ENCODE measurements at regions of chr2 and their contacts with region 1.

Region 1: DNA sequence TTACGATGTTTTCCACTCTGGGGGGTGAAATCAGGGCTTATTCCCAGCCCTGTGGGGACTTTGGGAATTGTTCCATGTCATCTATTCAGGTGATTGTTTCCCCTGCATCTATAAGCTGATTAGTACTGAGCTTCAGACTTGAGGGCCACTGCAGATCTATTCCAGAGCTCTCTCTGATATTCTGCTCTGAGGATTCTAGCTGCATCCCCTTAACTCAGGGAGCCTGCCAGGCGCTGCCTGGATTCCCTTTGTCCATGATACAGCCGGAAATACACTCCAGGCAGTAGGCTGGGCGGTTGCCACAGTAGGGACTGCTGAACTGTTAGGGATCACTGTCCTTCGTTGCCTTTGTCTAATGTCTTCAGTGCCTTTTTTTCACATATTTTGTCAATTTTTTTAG is 31.3 kb downstream of the PTRHD1 start:
- DNase-seq: no peak
- ATAC-seq: no peak
- H3K4me3 ChIP-seq: no peak overlapping the region
- H3K27ac ChIP-seq: no peak overlapping the region
- H3K4me1 ChIP-seq: no peaks in the 10 kb centered on the region
- H3K27me3 ChIP-seq: no peaks in the 10 kb centered on the region
- CTCF ChIP-seq: no peak
- POLR2A ChIP-seq: no peak

Region 2: GRCh38 chr2:24708537-24709152 is 53.2 kb before region 1 on chr2:
- in situ Hi-C with region 1: no loop called
- intact Hi-C with region 1: loop called (anchors 2 kb)
- DNase-seq: no peak
- ATAC-seq: no peak
- H3K4me3 ChIP-seq: no peak overlapping the region
- H3K27ac ChIP-seq: no peak overlapping the region
- H3K4me1 ChIP-seq: peaks cover 1 to 14% of the 10 kb centered on the region in 2 donors
- H3K27me3 ChIP-seq: no peaks in the 10 kb centered on the region
- CTCF ChIP-seq: no peak
- POLR2A ChIP-seq: no peak

Region 3: GRCh38 chr2:24806662-24807037 is 44.8 kb after region 1 on chr2:
- in situ Hi-C with region 1: no loop called
- intact Hi-C with region 1: no loop called
- DNase-seq: no peak
- ATAC-seq: no peak
- H3K4me3 ChIP-seq: no peak overlapping the region
- H3K27ac ChIP-seq: no peak overlapping the region
- H3K4me1 ChIP-seq: no peaks in the 10 kb centered on the region
- H3K27me3 ChIP-seq: no peaks in the 10 kb centered on the region
- CTCF ChIP-seq: no peak
- POLR2A ChIP-seq: no peak

Region 4: GRCh38 chr2:26223018-26223417 is 1461.2 kb after region 1 on chr2:
- in situ Hi-C with region 1: no loop called
- intact Hi-C with region 1: loop called (anchors 5 kb)
- DNase-seq: no peak
- ATAC-seq: no peak
- H3K4me3 ChIP-seq: no peak overlapping the region
- H3K27ac ChIP-seq: no peak overlapping the region
- H3K4me1 ChIP-seq: no peaks in the 10 kb centered on the region
- H3K27me3 ChIP-seq: no peaks in the 10 kb centered on the region
- CTCF ChIP-seq: no peak
- POLR2A ChIP-seq: no peak